Posterior cingulate gyrus (tissue), 11 donors: ENCODE measurements at regions of chr1 and their contacts with region 1.

Region 1: GRCh38 chr1:16955186-16955585 is 25.2 kb downstream of the MFAP2 start:
- DNase-seq: no peak

Region 2: DNA sequence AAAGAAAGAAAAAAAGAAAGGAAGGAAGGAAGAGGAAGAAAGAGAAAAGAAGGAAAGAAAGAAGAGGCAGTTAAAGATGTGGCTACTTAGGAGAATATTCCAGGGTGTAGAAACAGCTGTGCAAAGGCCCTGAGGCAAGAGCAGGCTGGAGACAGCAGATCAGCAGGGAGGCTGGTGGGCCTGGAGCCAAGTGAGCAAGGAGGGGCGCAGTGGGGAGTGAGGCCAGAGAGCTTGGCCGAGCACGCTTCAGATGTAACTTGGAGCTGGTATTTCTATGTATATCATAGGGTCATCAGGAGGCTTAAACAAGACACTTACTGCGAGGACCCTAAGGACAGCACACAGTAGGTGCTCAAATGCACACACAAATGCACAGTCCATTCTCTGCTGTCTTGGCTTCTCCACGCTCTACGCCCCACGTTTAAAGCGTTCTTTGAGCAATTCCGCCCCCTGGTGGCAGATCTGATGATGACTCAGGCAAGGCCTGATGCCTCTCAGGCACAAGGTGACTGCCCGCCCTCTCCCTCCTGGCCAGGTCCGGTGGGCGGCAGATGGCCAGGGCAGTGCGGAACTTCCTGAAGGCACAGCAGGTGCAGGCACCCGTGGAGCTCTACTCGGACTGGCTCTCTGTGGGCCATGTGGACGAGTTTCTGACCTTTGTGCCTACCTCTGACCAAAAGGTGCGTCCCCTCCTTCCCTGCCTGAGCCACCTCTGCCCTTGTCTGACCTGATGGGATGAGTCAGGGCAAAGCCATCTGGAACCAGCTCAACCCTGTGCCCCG is 281.8 kb after region 1 on chr1:
- intact Hi-C with region 1: loop called (anchors 10 kb)
- DNase-seq: peak; percentile 70 to 97 (median 92)